ENCODE measurements at regions of chr3 and their contacts with region 1.

Region 1: DNA sequence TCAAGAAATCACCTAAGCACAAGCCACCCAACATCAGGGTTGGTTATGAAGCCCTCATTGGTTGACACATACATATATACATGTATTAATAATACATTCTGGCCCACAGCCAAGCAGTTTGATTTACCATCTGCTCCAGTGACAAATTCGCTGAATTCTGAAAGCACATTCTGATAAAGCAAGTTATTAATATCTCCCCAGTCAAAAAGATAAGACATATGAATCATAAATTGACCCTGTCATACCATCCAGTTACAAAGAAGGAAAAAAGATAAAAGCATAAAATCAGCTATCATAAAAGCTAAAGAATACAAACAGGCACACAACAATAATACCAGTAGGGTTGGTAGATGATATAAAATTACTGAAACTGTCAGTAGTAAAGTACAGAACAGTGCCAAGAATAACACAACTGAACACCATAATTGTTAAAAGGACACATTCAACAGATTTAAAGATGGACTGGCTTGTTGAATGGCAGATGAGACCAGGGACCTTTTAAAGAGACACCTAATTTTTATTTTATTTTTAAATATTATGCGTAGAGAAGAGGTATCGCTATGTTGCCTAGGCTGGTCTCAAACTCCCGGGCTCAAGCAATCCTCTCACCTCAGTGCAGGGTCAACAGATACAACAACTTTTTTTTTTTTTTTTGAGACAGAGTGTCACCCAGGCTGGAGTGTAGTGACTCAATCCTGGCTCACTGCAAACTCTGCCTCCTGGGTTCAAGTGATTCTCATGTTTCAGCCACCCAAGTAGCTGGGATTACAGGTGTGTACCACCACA is 7.7 kb downstream of the SNX4 start:
- DNase-seq: no peak
- ATAC-seq: no peak
- H3K4me3 ChIP-seq: no peak overlapping the region
- H3K27ac ChIP-seq: no peak overlapping the region
- H3K4me1 ChIP-seq: no peaks in the 10 kb centered on the region
- H3K27me3 ChIP-seq: no peaks in the 10 kb centered on the region
- CTCF ChIP-seq: no peak

Region 2: DNA sequence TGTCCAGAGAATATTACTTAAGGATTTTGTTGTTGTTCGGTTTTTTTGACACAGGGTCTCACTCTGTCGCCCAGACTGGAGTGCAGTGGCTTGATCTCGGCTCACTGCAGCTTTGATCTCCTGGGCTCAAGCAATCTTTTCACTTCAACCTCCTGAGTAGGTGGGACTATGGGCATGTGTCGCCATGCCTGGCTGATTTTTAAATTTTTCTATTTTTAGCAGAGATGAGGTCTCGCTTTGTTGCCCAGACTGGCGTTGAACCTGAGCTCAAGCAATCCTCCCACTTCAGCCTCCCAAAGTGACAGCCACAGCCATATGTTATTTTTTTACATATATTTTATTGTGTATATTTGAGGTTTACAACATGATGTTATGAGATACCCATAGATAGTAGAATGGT is 868.9 kb before region 1 on chr3:
- CTCF ChIA-PET with region 1: no interaction called
- POLR2A ChIA-PET with region 1: interaction called, 17 read pairs
- in situ Hi-C with region 1: no loop called
- intact Hi-C with region 1: no loop called
- DNase-seq: no peak
- ATAC-seq: no peak
- H3K4me3 ChIP-seq: no peak overlapping the region
- H3K27ac ChIP-seq: no peak overlapping the region
- H3K4me1 ChIP-seq: no peaks in the 10 kb centered on the region
- H3K27me3 ChIP-seq: peaks cover 18% of the 10 kb centered on the region
- CTCF ChIP-seq: no peak

Region 3: GRCh38 chr3:125478326-125478725 is 34.0 kb before region 1 on chr3:
- CTCF ChIA-PET with region 1: no interaction called
- POLR2A ChIA-PET with region 1: interaction called, 12 read pairs
- in situ Hi-C with region 1: no loop called
- intact Hi-C with region 1: no loop called
- DNase-seq: no peak
- ATAC-seq: no peak
- H3K4me3 ChIP-seq: no peak overlapping the region
- H3K27ac ChIP-seq: no peak overlapping the region
- H3K4me1 ChIP-seq: no peaks in the 10 kb centered on the region
- H3K27me3 ChIP-seq: no peaks in the 10 kb centered on the region
- CTCF ChIP-seq: no peak

Measured in Panc1 (cell line).